Activated CD4-positive, alpha-beta memory T cell treated with anti-CD3 and anti-CD28 coated beads for 36 hours (primary cell): ENCODE measurements at regions of chr22 and their contacts with region 1.

Region 1: GRCh38 chr22:20456064-20456721 is 18.6 kb upstream of the SCARF2 start:
- DNase-seq: peak; percentile 85
- H3K4me3 Mint-ChIP-seq: no peak overlapping the region
- H3K27ac Mint-ChIP-seq: peak overlapping the region; percentile 38
- H3K4me1 Mint-ChIP-seq: peaks cover 18% of the 10 kb centered on the region
- H3K27me3 Mint-ChIP-seq: no peaks in the 10 kb centered on the region

Region 2: DNA sequence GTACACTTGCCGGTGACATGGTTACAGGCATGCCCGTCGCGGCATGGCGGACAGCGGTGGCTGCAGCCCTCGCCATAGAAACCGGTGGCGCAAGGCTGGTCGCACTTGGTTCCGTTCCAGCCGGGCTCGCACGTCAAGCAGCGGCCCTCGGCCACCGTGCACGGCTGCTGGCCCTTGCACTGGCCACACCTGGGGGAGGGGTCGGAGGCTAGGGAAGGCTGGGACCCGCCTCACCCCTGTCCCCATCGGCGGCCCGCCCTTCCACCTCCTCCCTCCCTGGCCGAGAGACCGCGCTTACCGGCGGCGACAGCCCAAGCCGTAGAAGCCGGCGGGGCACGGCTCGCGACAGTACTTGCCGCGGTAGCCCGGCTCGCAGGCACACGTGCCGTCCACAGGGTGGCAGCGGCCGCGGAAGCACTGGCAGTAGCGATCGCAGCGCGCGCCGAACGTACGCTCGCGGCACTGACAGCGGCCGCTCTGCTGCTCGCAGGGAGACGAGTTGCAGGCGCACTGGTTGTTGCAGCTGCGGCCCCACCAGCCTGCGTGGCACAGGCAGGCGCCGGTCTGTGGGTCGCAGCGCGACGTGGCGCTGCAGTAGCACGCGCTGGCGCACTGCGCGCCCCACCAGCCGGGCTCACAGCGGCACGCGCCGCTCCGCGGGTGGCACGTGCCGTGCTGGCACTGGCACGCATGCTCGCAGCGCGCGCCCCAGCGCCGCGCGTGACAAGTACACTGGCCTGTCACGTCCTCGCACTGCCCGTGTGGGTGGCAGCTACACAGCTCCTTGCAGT is 25.3 kb before region 1 on chr22:
- CTCF ChIA-PET with region 1: interaction called, 16 read pairs
- POLR2A ChIA-PET with region 1: no interaction called
- intact Hi-C with region 1: loop called (anchors 2 kb)
- DNase-seq: peak; percentile 71
- H3K4me3 Mint-ChIP-seq: peak overlapping the region; percentile 23
- H3K27ac Mint-ChIP-seq: no peak overlapping the region
- H3K4me1 Mint-ChIP-seq: peaks cover 15% of the 10 kb centered on the region
- H3K27me3 Mint-ChIP-seq: peaks cover 46% of the 10 kb centered on the region

Region 3: GRCh38 chr22:20437613-20438426 is 18.4 kb before region 1 on chr22 and contains the start of gene SCARF2:
- CTCF ChIA-PET with region 1: interaction called, 16 read pairs
- POLR2A ChIA-PET with region 1: no interaction called
- intact Hi-C with region 1: loop called (anchors 2 kb)
- DNase-seq: no peak
- H3K4me3 Mint-ChIP-seq: peak within 1 kb of the TSS; percentile 30
- H3K27ac Mint-ChIP-seq: no peak within 1 kb of the TSS
- H3K4me1 Mint-ChIP-seq: peaks cover 14% of the 10 kb centered on the region
- H3K27me3 Mint-ChIP-seq: peaks cover 37% of the 10 kb centered on the region
- total RNA-seq, gene SCARF2: 0.43 to 0.70 TPM

Region 4: GRCh38 chr22:20469110-20469868 is 13.1 kb after region 1 on chr22:
- CTCF ChIA-PET with region 1: interaction called, 12 read pairs
- POLR2A ChIA-PET with region 1: interaction called, 3 read pairs
- intact Hi-C with region 1: no loop called
- DNase-seq: no peak
- H3K4me3 Mint-ChIP-seq: no peak overlapping the region
- H3K27ac Mint-ChIP-seq: peak overlapping the region; percentile 57
- H3K4me1 Mint-ChIP-seq: peaks cover 47% of the 10 kb centered on the region
- H3K27me3 Mint-ChIP-seq: no peaks in the 10 kb centered on the region